ENCODE measurements at regions of chr6 and their contacts with region 1.

Region 1: GRCh38 chr6:149060300-149060997 is 257.1 kb upstream of the TAB2 start:
- DNase-seq: peak; percentile 52
- CTCF ChIP-seq: no peak

Region 2: DNA sequence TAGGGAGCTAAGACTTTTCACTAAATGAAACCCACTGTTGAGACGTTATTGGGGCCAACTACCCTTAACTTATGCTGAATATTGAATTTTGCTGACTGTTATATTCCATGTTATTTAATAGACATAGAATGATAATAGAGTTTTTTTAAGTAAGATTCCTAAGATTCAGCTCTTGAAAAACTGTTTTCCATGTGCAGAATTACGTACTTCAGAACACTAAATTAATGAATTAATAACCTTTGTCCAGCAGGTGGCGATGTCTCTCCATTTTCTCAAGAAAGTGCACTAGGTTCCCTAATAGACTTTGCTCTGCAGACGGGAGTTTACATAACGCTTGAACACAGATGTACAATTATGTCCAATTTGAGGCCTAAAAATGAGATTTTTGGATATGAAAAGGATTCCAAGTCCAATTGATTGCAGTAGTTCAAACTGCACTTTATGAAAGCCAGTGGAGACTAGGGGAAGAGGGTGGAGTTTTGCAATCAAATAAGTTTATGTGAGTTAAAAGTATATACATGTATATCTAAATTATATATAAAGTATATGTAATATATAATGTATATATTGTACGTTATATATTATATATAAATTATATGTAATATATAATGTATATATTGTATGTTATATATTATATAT is 31.6 kb before region 1 on chr6:
- CTCF ChIA-PET with region 1: interaction called, 62 read pairs
- POLR2A ChIA-PET with region 1: no interaction called
- DNase-seq: peak; percentile 59
- CTCF ChIP-seq: peak; percentile 54

Region 3: DNA sequence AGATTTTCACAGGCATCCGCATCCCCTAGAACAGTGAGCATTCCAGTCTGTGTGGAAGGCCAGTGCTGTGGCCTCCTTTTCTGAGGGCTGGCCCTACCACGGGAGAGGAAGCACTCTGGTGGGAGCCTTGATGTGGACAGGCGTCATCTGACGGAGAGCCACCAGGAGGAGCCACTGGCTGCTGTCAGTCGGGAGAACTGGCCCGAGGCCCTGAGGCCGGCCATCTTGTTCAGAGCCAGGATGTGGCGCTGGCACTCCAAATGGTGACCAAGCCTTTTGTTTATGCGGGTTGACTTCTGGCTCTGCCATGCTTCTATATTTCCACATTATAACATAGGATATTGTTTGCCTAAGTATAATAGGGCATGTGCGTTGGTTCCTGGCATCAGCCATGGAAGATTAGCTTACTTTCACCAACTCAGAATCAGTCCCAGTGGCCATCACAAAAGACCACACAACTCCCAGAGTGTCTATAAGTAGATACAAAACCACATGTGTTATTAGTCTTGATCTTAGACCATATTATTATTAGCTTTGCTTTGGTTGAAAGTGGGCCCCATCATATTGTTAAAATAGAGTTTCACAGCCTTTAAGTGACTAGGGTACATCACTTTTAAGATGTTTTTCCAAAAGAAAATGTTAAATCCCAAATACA is 16.8 kb before region 1 on chr6:
- CTCF ChIA-PET with region 1: interaction called, 59 read pairs
- POLR2A ChIA-PET with region 1: no interaction called
- DNase-seq: no peak
- CTCF ChIP-seq: peak; percentile 31

Region 4: DNA sequence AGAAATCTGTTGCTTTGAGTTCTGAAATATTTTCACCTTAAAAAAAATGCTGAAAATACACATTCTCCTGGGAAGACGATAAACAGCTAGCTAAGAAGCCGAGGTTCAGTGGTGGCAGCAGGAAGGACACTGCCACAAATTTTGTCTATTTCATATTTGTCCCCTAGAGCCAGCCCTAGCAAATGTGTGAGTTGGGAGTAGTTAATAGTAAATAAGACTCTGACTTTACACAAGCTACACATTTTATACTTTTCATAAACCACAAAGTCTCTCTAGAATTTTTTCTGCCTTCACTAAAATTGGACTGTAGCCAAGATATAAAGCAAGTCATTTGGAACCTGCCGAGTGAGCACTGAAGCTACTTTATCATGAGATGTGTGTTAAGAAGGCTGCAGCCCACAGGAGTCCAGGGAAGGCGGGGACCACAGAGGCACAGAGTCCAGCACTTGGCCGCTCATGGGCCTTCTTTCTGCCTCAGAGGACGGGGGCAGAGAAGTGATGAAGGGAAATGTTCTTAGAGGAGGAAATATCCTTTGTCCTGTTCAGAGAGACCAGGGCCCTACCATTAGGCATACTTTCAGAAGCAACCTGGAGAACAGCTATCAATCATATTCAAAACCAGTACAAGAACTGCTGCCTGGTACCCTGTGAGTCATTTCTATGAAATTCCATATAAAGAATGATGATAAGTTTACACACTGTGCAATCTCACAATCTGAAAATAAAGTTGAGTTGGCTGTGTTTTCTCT is 15.3 kb after region 1 on chr6:
- CTCF ChIA-PET with region 1: interaction called, 41 read pairs
- POLR2A ChIA-PET with region 1: no interaction called
- DNase-seq: no peak
- CTCF ChIP-seq: no peak

Region 5: DNA sequence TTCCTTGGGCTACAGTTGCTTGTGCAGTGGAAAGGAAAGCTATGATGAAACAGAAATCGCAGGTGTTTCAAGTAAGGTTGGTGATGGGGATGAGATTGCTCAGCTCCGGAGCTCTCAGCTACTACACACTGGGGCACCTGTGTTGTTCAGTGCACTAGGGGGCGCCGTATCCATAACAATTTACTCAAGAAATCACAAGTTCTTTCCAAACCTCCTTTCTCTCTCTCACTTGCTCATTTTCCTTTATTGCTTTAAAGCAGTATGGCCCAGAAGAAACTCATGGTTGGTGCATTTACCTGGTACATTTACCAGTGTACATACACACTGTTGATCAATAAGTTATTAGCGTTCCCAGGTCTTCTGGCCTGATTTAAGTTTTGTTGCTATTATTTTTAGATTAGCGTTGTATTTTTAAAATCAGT is 21.8 kb after region 1 on chr6:
- CTCF ChIA-PET with region 1: interaction called, 41 read pairs
- POLR2A ChIA-PET with region 1: no interaction called
- DNase-seq: peak; percentile 69
- CTCF ChIP-seq: peak; percentile 81

Measured in GM10248 (cell line).